ENCODE measurements at regions of chr18 and their contacts with region 1.

Region 1: DNA sequence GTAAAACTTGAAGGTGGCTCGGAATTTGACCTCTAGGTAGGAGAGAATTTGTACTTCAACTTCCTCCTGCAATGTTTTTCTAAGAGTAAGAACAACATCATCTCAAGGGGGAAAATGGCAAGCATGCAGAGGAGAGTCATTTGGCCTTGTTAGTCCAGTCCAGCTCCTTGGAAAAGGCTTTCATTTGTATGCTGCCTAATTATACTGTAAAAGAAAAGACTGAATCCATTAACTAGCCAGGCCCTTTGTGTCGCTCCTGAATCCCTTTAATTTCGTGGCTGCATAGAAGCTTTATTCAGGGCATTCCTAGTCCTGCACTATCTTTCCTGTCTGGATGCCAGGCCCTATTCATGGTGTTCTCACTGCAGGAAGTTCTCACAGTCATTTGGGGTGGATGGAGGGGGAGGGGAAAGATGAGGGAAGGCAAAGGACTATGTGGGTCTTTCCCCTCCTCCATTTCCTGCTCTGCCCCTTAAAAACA is 36.0 kb downstream of the PHLPP1 start:
- DNase-seq: no peak
- ATAC-seq: no peak
- H3K4me3 ChIP-seq: no peak overlapping the region
- H3K27ac ChIP-seq: no peak overlapping the region
- H3K4me1 ChIP-seq: peaks cover 81% of the 10 kb centered on the region
- H3K27me3 ChIP-seq: no peaks in the 10 kb centered on the region
- CTCF ChIP-seq: no peak
- EP300 ChIP-seq: no peak
- POLR2A ChIP-seq: no peak
- RAD21 ChIP-seq: no peak

Region 2: GRCh38 chr18:62637807-62638687 is 113.3 kb before region 1 on chr18:
- CTCF ChIA-PET with region 1: no interaction called
- POLR2A ChIA-PET with region 1: no interaction called
- in situ Hi-C with region 1: no loop called
- intact Hi-C with region 1: no loop called
- DNase-seq: peak; percentile 28
- ATAC-seq: peak; percentile 91
- H3K4me3 ChIP-seq: no peak overlapping the region
- H3K27ac ChIP-seq: no peak overlapping the region
- H3K4me1 ChIP-seq: peaks cover 22% of the 10 kb centered on the region
- H3K27me3 ChIP-seq: no peaks in the 10 kb centered on the region
- CTCF ChIP-seq: peak; percentile 70
- EP300 ChIP-seq: no peak
- POLR2A ChIP-seq: no peak
- RAD21 ChIP-seq: peak; percentile 65

Region 3: GRCh38 chr18:62767321-62767720 is 15.9 kb after region 1 on chr18:
- CTCF ChIA-PET with region 1: no interaction called
- POLR2A ChIA-PET with region 1: no interaction called
- in situ Hi-C with region 1: no loop called
- intact Hi-C with region 1: no loop called
- DNase-seq: no peak
- ATAC-seq: no peak
- H3K4me3 ChIP-seq: no peak overlapping the region
- H3K27ac ChIP-seq: no peak overlapping the region
- H3K4me1 ChIP-seq: peaks cover 68% of the 10 kb centered on the region
- H3K27me3 ChIP-seq: no peaks in the 10 kb centered on the region
- CTCF ChIP-seq: no peak
- EP300 ChIP-seq: no peak
- POLR2A ChIP-seq: no peak
- RAD21 ChIP-seq: no peak

Region 4: GRCh38 chr18:62802523-62802922 is 51.1 kb after region 1 on chr18:
- CTCF ChIA-PET with region 1: no interaction called
- POLR2A ChIA-PET with region 1: no interaction called
- in situ Hi-C with region 1: no loop called
- intact Hi-C with region 1: loop called (anchors 5 kb)
- DNase-seq: no peak
- ATAC-seq: no peak; the same call in 2 of the 3 replicates
- H3K4me3 ChIP-seq: no peak overlapping the region
- H3K27ac ChIP-seq: no peak overlapping the region
- H3K4me1 ChIP-seq: peaks cover 51% of the 10 kb centered on the region
- H3K27me3 ChIP-seq: no peaks in the 10 kb centered on the region
- CTCF ChIP-seq: peak; percentile 29; the same call in 1 of the 2 replicates
- EP300 ChIP-seq: no peak
- POLR2A ChIP-seq: no peak
- RAD21 ChIP-seq: no peak

Region 5: DNA sequence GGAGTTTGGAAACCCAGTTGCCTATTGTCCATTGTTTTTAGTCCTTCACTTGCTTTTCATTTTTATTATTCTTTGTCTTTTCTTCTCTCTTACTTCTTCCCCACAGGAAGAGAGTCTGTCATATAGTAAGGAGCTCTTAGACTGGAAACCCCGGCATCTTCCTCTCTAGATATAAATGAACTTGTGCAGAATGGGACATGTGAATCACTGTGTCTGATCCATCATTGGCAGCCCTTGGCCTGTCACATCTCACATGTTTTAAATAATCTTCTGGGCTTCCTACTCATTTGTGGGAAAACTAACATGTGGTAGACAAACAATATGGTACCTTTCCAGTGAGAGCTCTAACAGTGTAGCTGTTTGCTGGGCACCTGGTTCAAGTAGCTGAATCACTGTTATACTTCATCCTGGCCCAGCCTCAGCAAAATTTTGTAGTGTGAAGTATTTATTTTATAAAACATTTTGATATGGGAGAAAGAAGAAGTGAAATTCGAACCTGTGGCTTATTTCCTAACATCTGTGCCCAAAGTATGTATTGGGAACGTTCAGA is 76.8 kb after region 1 on chr18:
- CTCF ChIA-PET with region 1: no interaction called
- POLR2A ChIA-PET with region 1: no interaction called
- in situ Hi-C with region 1: no loop called
- intact Hi-C with region 1: loop called (anchors 2 kb)
- DNase-seq: no peak
- ATAC-seq: no peak
- H3K4me3 ChIP-seq: no peak overlapping the region
- H3K27ac ChIP-seq: no peak overlapping the region
- H3K4me1 ChIP-seq: no peaks in the 10 kb centered on the region
- H3K27me3 ChIP-seq: no peaks in the 10 kb centered on the region
- CTCF ChIP-seq: no peak
- EP300 ChIP-seq: no peak
- POLR2A ChIP-seq: no peak
- RAD21 ChIP-seq: no peak